Activated CD4-positive, alpha-beta T cell treated with anti-CD3 and anti-CD28 coated beads, Interleukin-2, amount 10 ng/mL, durations not matched to agents 24 days and 14 days (primary cell): ENCODE measurements at regions of chr2 and their contacts with region 1.

Region 1: DNA sequence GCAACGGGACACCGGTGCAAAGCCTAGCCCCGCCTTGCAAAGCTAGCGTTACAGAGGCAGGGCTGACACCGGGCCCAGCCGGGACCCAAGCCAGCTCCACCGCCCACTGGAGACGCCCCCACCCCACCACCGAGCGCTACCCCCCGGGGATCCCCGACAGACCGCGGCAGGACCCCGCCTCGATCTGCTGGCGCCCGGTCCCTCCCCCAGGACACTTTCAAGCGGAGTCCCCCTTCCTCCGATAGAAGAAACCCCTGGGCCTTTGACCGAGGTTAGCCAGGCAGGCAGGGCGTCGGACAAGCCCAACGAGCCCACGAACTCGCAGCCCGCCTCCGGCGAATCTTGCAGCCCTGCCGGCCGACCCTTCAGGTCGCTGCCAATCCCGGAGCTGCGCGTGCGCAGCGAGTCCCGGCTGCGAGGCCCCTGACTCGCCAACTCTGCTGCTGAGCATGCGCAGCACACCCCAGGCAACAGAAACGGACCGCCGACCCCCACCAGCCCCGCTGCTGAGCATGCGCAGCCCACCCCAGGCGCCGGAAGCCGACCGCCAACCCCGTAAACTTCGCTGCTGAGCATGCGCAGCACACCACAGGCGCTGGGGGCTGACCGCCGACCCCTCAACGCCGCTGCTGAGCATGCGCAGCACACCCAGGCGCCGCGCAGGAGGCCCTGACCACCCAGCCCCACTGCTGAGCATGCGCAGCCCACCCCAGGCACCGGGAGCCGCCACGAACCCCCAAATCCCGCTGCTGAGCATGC is 656 bp downstream of the ADI1 start:
- DNase-seq: peak; percentile 99
- H3K4me3 Mint-ChIP-seq: peak overlapping the region; percentile 86
- H3K27ac Mint-ChIP-seq: peak overlapping the region; percentile 82
- H3K4me1 Mint-ChIP-seq: peaks cover 33% of the 10 kb centered on the region
- H3K27me3 Mint-ChIP-seq: no peaks in the 10 kb centered on the region

Region 2: DNA sequence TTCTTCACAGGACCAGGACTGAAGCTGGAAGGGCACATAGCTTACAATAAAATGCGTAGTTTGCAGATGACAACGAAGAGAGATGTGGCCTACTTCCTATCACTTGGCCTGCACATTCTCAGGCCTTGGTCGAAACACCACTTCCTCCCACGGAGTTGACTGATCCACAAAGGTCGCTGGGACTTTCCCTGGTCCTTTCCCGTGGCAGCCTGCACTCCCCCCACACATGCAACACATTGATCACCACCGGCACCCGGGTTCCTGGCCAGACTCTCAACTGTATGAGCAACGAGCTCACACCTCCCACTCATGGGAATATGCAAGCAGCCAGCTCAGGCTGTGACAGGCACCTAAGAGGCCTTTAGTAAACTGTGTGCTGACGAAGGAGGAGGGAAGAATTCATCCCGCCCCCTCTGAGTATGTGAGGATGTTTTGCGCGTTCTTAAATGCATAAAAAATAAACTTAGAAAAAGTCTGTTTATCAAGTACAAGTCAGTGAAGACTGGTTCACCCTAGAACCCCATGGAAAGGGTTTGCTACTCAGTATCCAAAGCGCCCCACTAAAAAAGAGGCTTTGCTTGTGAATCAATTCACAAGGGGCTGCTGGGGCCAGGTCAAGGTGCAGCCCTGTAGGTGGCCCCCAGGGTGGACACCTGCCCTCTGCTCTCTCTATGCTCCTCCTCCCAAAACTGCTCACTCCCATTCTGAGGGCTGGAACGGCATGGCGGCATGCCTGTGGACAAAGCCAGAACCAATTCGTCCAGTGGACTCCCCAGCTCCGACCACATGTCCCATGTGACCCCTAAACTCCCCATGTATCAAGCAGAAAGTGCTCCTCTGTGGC is 295.4 kb before region 1 on chr2:
- intact Hi-C with region 1: loop called (anchors 2 kb)
- DNase-seq: peak; percentile 91
- H3K4me3 Mint-ChIP-seq: peak overlapping the region; percentile 52
- H3K27ac Mint-ChIP-seq: peak overlapping the region; percentile 94
- H3K4me1 Mint-ChIP-seq: peaks cover 42% of the 10 kb centered on the region
- H3K27me3 Mint-ChIP-seq: no peaks in the 10 kb centered on the region

Region 3: DNA sequence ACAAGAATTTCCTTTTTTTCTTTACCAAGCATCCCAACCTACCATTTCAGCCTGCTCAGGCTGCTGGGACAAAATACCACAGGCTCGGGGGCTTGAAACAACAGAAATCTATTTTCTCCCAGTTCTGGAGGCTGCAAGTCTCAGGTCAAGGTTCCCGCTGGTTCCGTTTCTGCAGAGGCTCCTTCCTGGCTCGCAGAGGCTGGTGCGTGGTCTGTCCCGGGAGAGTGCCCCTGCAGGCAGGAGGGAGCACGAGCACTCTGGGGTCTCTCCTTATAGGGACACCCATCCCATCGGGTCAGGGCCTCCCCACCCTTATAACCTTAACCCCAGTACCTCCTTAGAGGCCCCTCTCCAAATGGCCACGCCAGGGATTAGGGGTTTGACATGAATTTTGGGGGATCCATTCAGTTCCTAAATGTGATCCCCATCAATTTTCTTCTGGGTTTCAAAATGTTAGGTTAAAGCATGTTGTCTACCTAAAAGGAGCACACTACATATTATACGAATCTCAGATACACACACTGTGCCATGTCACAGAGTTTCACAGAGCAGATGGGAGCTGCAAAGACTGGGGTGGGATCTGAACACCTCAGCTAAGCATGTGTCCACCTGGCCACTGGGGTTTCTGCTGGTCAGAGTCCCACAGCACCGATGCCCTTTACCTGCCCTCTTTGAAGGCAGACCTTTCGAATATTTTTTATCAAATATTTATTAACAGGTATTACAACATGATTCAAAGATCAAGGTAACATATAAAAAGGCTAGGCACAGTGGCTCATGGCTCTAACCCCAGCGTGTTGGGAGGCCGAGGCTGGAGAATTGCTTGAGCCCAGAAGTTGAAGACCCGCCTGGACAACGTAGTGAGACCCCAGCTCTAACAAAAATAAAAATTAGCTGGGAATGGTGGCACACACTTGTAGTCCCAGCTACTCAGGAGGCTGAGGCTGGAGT is 18.3 kb after region 1 on chr2:
- intact Hi-C with region 1: loop called (anchors 1 kb)
- DNase-seq: no peak
- H3K4me3 Mint-ChIP-seq: peak overlapping the region; percentile 78
- H3K27ac Mint-ChIP-seq: peak overlapping the region; percentile 81
- H3K4me1 Mint-ChIP-seq: peaks cover 5% of the 10 kb centered on the region
- H3K27me3 Mint-ChIP-seq: no peaks in the 10 kb centered on the region

Region 4: GRCh38 chr2:3558205-3559014 is 39.7 kb after region 1 on chr2 and contains the start of gene RNASEH1:
- intact Hi-C with region 1: loop called (anchors 1 kb)
- DNase-seq: peak; percentile 100
- H3K4me3 Mint-ChIP-seq: peak within 1 kb of the TSS; percentile 89
- H3K27ac Mint-ChIP-seq: peak within 1 kb of the TSS; percentile 90
- H3K4me1 Mint-ChIP-seq: peaks cover 26% of the 10 kb centered on the region
- H3K27me3 Mint-ChIP-seq: no peaks in the 10 kb centered on the region
- total RNA-seq, gene RNASEH1: 27.8 and 29.8 TPM in 2 replicates

Region 5: DNA sequence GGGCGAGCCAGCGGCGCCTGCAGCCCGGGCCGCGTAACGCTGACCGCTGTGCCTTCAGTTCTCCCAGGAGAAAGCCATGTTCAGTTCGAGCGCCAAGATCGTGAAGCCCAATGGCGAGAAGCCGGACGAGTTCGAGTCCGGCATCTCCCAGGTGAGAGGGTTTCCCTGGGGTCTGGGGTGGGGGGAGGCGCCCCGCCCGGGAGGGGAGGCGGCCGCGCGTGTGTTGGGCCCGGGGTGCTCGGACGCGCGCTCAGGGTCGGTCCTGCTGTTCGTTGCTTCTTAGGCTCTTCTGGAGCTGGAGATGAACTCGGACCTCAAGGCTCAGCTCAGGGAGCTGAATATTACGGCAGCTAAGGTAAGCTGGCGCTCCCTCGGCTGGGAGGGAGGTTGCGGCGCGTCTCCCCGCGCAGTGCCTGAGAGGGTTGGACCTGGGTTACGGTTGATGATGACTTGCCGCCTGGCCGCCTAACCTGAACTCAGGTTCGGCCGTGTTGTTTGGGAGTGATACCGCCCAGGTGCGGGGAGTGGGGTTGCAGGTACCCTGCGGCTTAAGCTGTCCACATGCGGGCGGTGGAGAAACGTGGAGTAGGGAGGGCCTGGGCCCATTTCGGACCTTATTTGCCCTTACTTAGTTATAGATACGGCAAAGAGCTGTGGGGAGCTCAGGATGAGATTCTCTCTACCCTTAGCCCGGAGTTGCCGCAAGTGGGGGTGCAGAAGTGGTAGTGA is 57.0 kb after region 1 on chr2:
- intact Hi-C with region 1: loop called (anchors 1 kb)
- DNase-seq: peak; percentile 78
- H3K4me3 Mint-ChIP-seq: peak overlapping the region; percentile 92
- H3K27ac Mint-ChIP-seq: peak overlapping the region; percentile 84
- H3K4me1 Mint-ChIP-seq: peaks cover 45% of the 10 kb centered on the region
- H3K27me3 Mint-ChIP-seq: no peaks in the 10 kb centered on the region